ENCODE measurements at regions of chr10 and their contacts with region 1.

Region 1: DNA sequence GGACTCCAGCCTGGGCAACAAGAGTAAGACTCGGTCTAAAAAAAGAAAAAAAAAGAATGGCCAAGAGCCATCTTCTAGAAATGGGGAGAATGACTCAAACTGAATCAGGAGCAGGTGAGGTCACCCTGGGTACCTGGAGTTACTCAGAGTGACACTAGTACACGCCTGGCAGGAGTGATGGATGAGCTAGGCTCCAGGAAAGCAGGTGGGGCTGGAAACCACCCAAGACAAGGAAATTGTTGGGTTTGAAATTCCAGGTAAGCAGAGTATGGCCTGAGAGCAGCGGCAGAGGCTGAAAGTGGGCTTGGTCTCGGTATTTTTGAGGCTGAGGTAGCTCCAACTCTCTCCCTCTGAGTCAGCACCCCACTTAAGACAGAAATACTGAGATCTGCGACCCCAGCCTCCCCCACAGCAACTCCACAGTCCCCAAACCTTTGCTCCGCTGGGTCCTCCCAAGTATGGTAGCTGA is 18.5 kb downstream of the DDIT4 start:
- DNase-seq: peak; percentile 89
- H3K4me3 Mint-ChIP-seq: no peak overlapping the region
- H3K27ac Mint-ChIP-seq: peak overlapping the region; percentile 100
- H3K4me1 Mint-ChIP-seq: peaks cover 59% of the 10 kb centered on the region
- H3K27me3 Mint-ChIP-seq: peaks cover 3% of the 10 kb centered on the region

Region 2: GRCh38 chr10:72248468-72249151 is 43.6 kb before region 1 on chr10:
- CTCF ChIA-PET with region 1: no interaction called
- POLR2A ChIA-PET with region 1: interaction called, 11 read pairs
- intact Hi-C with region 1: loop called (anchors 1 kb)
- DNase-seq: peak; percentile 84
- H3K4me3 Mint-ChIP-seq: peak overlapping the region; percentile 83
- H3K27ac Mint-ChIP-seq: peak overlapping the region; percentile 98
- H3K4me1 Mint-ChIP-seq: peaks cover 74% of the 10 kb centered on the region
- H3K27me3 Mint-ChIP-seq: no peaks in the 10 kb centered on the region

Region 3: DNA sequence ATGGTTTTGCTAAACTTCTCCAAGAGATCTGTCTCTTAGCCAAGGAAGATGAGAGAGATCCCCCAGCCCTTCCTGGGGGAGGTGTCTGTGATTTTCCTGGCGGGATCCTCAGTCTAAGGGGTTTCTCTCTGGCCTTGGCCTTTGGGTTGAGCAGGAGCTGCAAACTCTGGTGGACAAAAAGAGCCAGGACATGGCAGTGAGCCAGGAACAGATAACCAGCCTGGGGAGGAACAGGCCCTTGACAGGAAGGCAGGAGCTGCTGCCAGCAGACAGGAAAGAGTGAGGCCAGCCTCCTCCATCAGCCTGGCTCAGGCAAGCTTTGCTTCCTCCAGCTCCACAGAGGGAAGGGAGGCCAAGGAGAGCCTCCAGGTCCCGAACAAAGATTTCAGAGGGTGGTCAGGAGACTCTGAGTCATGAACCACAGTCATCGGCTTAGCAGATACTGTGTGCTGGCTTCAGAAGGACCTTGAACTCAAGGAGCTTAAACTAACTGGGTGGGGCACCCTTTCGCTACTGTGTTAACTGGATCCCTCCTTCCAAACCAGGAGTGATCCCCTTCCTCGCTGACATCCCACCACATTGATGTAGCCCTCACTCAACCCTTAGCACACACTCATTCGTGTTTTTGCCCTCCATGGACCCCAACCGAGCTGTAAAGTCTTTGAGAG is 16.2 kb after region 1 on chr10:
- CTCF ChIA-PET with region 1: interaction called, 6 read pairs
- POLR2A ChIA-PET with region 1: interaction called, 50 read pairs
- intact Hi-C with region 1: loop called (anchors 1 kb)
- DNase-seq: peak; percentile 70
- H3K4me3 Mint-ChIP-seq: no peak overlapping the region
- H3K27ac Mint-ChIP-seq: peak overlapping the region; percentile 85
- H3K4me1 Mint-ChIP-seq: peaks cover 65% of the 10 kb centered on the region
- H3K27me3 Mint-ChIP-seq: no peaks in the 10 kb centered on the region

Region 4: GRCh38 chr10:72319416-72320254 is 27.4 kb after region 1 on chr10:
- CTCF ChIA-PET with region 1: interaction called, 11 read pairs
- POLR2A ChIA-PET with region 1: interaction called, 219 read pairs
- intact Hi-C with region 1: loop called (anchors 1 kb)
- DNase-seq: peak; percentile 93
- H3K4me3 Mint-ChIP-seq: peak overlapping the region; percentile 85
- H3K27ac Mint-ChIP-seq: peak overlapping the region; percentile 100
- H3K4me1 Mint-ChIP-seq: peaks cover 79% of the 10 kb centered on the region
- H3K27me3 Mint-ChIP-seq: no peaks in the 10 kb centered on the region

Measured in activated CD4-positive, alpha-beta memory T cell treated with anti-CD3 and anti-CD28 coated beads for 36 hours (primary cell).